ENCODE measurements at regions of chr1 and their contacts with region 1.

Region 1: GRCh38 chr1:241782396-241782795 is 65.6 kb upstream of the EXO1 start:
- DNase-seq: peak; percentile 27
- H3K4me3 Mint-ChIP-seq: no peak overlapping the region
- H3K27ac Mint-ChIP-seq: peak overlapping the region; percentile 0
- H3K4me1 Mint-ChIP-seq: peaks cover 10% of the 10 kb centered on the region
- H3K27me3 Mint-ChIP-seq: no peaks in the 10 kb centered on the region
- CTCF ChIP-seq: no peak

Region 2: GRCh38 chr1:241799416-241799815 is 17.0 kb after region 1 on chr1:
- CTCF ChIA-PET with region 1: interaction called, 6 read pairs
- POLR2A ChIA-PET with region 1: interaction called, 8 read pairs
- intact Hi-C with region 1: loop called (anchors 2 kb)
- DNase-seq: peak; percentile 51
- H3K4me3 Mint-ChIP-seq: no peak overlapping the region
- H3K27ac Mint-ChIP-seq: peak overlapping the region; percentile 8
- H3K4me1 Mint-ChIP-seq: peaks cover 23% of the 10 kb centered on the region
- H3K27me3 Mint-ChIP-seq: no peaks in the 10 kb centered on the region
- CTCF ChIP-seq: no peak

Measured in MCF 10A (cell line).